HEK293 (cell line): ENCODE measurements at regions of chr12 and their contacts with region 1.

Region 1: DNA sequence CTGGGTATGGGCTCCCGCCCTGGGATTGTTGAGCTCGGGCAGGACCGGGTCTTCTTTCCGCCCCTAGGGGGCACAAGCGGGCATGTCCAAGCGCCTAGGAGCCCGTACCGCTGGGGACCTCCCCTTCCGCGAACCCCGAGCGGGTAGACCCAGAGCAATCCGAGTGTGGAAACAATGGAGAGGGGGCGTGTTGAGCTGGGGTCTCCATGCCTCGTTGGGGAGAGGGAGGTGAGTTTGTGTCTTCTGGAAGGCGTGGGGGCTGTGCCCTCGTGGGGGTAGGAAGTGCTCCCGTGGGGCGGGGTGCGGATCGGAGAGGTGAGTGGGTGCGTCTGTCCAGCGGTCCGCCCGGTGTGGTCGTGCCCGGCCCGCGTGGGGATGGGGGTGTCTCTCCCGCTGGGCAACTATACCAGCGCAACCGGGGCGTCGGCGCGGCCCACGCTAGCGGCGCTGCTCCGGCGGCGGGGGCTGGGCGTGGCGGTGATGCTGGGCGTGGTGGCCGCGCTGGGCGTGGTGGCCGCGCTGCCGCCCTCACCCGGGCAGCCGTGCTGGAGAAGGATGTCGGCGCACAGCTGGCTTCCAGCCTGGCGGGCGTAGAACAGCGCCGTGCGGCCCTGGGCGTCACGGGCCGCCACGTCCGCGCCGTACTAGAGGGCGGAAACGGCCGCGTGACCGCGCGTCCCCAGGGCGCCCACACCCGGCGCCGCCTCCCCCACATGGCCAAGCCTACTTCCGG is 12.2 kb downstream of the AGAP2 start:
- H3K4me3 ChIP-seq: peak overlapping the region; percentile 76
- H3K27ac ChIP-seq: peak overlapping the region; percentile 82
- H3K4me1 ChIP-seq: no peaks in the 10 kb centered on the region
- CTCF ChIP-seq: peak; percentile 88

Region 2: GRCh38 chr12:57693659-57694458 is 32.5 kb before region 1 on chr12 and contains the start of gene OS9:
- CTCF ChIA-PET with region 1: interaction called, 12 read pairs
- POLR2A ChIA-PET with region 1: no interaction called
- H3K4me3 ChIP-seq: peak within 1 kb of the TSS; percentile 87
- H3K27ac ChIP-seq: no peak within 1 kb of the TSS; the same call in 1 of the 2 replicates
- H3K4me1 ChIP-seq: peaks cover 3% of the 10 kb centered on the region; the same call in 1 of the 2 replicates
- CTCF ChIP-seq: peak; percentile 60

Region 3: GRCh38 chr12:57744777-57745484 is 18.6 kb after region 1 on chr12 and contains the start of gene TSPAN31:
- CTCF ChIA-PET with region 1: interaction called, 22 read pairs
- POLR2A ChIA-PET with region 1: interaction called, 15 read pairs
- H3K4me3 ChIP-seq: peak within 1 kb of the TSS; percentile 69
- H3K27ac ChIP-seq: peak within 1 kb of the TSS; percentile 80
- H3K4me1 ChIP-seq: 0 out of 2 replicates have a peak, but pooled peaks cover 2% of the 10 kb centered on the region
- CTCF ChIP-seq: no peak

Region 4: DNA sequence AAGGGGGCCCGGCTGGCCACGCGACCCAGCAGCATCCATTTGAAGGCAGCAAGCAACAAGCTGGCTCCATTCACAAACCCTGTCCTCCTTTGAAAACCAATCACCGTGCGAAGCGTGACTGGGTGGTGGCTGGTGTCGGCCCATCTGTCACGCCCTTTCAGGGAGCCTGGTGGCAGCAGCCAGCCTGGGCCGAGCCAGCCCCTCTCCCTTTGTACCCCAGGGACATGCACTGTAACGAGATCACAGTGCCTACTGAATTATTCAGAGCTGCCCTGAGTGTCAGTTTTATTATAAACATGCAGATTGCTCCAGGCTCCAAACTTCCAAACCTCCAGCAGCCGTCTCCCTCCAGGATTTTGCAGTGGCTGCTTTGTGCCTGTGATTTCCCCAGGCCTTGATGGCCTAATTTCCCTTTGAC is 142.5 kb after region 1 on chr12:
- CTCF ChIA-PET with region 1: no interaction called
- POLR2A ChIA-PET with region 1: no interaction called
- H3K4me3 ChIP-seq: no peak overlapping the region
- H3K27ac ChIP-seq: no peak overlapping the region
- H3K4me1 ChIP-seq: no peaks in the 10 kb centered on the region
- CTCF ChIP-seq: no peak